GM23248 (cell line): ENCODE measurements at regions of chr1 and their contacts with region 1.

Region 1: GRCh38 chr1:180424848-180425457 is 77.4 kb downstream of the ACBD6 start:
- DNase-seq: no peak
- H3K4me3 ChIP-seq: no peak overlapping the region
- H3K27ac ChIP-seq: no peak overlapping the region
- H3K4me1 ChIP-seq: no peaks in the 10 kb centered on the region
- H3K27me3 ChIP-seq: no peaks in the 10 kb centered on the region

Region 2: DNA sequence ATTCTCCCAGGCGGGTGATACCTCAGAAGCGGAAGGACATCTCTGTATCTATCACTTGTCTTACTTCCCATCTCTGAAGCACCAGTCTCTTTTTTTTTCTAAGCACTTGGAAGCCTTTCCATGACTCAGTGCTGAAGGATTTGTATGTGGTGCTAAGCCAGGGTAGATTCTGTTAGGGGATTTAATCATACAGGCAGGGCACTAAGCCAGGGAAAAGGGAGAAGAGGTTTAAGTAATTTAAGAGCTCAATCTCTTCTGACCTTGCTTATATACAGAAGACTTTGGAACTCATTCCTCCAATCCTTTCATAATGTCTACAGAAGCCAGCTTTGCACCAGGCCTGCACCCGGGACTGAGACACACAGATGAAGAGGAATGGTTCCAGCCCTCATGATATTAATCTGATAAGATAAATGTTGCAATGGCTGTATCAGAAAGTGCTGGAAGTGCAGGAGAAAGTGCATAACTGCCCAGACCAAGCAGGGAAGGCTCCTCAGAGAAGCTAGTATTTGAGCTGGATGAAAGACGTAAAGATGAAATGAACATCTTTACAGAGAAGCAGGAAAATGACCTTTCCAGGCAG is 670.8 kb before region 1 on chr1:
- in situ Hi-C with region 1: no loop called
- DNase-seq: peak; percentile 83
- H3K4me3 ChIP-seq: no peak overlapping the region
- H3K27ac ChIP-seq: no peak overlapping the region
- H3K4me1 ChIP-seq: no peaks in the 10 kb centered on the region
- H3K27me3 ChIP-seq: peaks cover 22% of the 10 kb centered on the region

Region 3: GRCh38 chr1:180188091-180188506 is 236.9 kb before region 1 on chr1:
- in situ Hi-C with region 1: loop called (anchors 10 kb)
- DNase-seq: peak; percentile 64
- H3K4me3 ChIP-seq: no peak overlapping the region
- H3K27ac ChIP-seq: no peak overlapping the region
- H3K4me1 ChIP-seq: no peaks in the 10 kb centered on the region
- H3K27me3 ChIP-seq: no peaks in the 10 kb centered on the region